ENCODE measurements at regions of chr16 and their contacts with region 1.

Region 1: DNA sequence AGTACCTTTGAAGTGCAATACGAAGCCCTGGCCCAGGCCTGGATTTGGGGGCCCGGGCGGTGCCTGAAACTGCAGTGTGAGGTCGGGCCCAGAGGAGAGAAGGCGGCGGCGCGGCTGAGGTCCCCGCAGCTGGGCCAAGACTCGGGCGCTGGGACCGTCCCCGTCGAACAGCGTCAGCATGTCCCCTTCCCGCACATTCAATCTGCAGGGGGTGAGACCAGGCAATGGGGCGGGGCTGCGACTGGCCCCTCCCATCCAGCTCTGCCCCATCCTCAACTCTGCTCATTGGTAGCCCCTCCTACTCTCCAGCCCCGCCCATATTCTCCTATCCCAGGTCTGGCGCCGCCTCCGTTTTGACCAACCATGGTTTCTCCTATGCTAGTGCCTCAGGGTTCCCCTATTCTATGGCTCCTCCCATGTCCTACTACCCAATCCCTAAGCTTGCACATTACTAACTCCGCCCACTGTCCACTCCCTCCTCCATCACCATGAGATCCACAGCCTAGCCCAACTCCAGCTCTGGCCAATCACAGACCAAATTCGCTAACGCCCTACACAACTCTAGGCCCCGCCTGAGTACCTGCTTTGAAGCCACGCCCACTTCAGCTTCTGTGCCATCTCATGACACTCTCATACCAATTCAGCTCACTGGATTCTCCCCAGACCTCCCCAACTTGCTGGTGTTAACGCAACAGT is 14.4 kb upstream of the CDIPT start:
- DNase-seq: no peak
- ATAC-seq: peak; percentile 62
- H3K4me3 ChIP-seq: no peak overlapping the region
- H3K27ac ChIP-seq: no peak overlapping the region
- H3K4me1 ChIP-seq: no peaks in the 10 kb centered on the region
- H3K27me3 ChIP-seq: no peaks in the 10 kb centered on the region
- CTCF ChIP-seq: no peak

Region 2: DNA sequence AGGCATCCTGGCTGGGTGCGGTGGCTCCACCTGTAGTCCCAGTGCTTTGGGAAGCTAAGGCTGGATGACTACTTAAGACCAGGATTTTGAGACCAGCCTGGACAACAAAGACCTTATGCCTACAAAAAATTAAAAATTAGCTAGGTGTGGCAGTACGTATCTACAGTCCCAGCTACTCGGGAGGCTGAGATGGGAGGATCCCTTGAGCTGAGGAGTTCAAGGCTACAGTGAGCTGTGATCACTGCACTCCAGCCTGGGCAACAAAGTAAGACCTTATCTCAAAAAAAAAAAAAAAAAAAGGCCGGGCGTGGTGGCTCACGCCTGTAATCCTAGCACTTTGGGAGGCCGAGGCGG is 51.1 kb before region 1 on chr16:
- CTCF ChIA-PET with region 1: interaction called, 10 read pairs
- POLR2A ChIA-PET with region 1: no interaction called
- in situ Hi-C with region 1: no loop called
- intact Hi-C with region 1: no loop called
- DNase-seq: no peak
- ATAC-seq: no peak
- H3K4me3 ChIP-seq: no peak overlapping the region
- H3K27ac ChIP-seq: no peak overlapping the region
- H3K4me1 ChIP-seq: peaks cover 29% of the 10 kb centered on the region
- H3K27me3 ChIP-seq: no peaks in the 10 kb centered on the region
- CTCF ChIP-seq: no peak

Region 3: GRCh38 chr16:29842732-29843346 is 34.6 kb before region 1 on chr16:
- CTCF ChIA-PET with region 1: no interaction called
- POLR2A ChIA-PET with region 1: no interaction called
- in situ Hi-C with region 1: no loop called
- intact Hi-C with region 1: no loop called
- DNase-seq: no peak
- ATAC-seq: no peak; the same call in 1 of the 2 replicates
- H3K4me3 ChIP-seq: no peak overlapping the region
- H3K27ac ChIP-seq: no peak overlapping the region
- H3K4me1 ChIP-seq: no peaks in the 10 kb centered on the region
- H3K27me3 ChIP-seq: no peaks in the 10 kb centered on the region
- CTCF ChIP-seq: no peak